ENCODE measurements at regions of chr14 and their contacts with region 1.

Region 1: GRCh38 chr14:96424109-96424989 is 32.4 kb downstream of the AK7 start:
- DNase-seq: peak; percentile 80
- ATAC-seq: peak; percentile 86
- H3K4me3 ChIP-seq: peak overlapping the region; percentile 14 to 57 (median 53)
- H3K4me3 Mint-ChIP-seq: peak overlapping the region; percentile 91
- H3K27ac ChIP-seq: no peak overlapping the region
- H3K27ac Mint-ChIP-seq: no peak overlapping the region
- H3K4me1 ChIP-seq: peaks cover 12 to 14% of the 10 kb centered on the region in 2 donors
- H3K4me1 Mint-ChIP-seq: peaks cover 23% of the 10 kb centered on the region
- H3K27me3 ChIP-seq: no peaks in the 10 kb centered on the region
- H3K27me3 Mint-ChIP-seq: peaks cover 4% of the 10 kb centered on the region
- CTCF ChIP-seq: peak; percentile 99

Region 2: DNA sequence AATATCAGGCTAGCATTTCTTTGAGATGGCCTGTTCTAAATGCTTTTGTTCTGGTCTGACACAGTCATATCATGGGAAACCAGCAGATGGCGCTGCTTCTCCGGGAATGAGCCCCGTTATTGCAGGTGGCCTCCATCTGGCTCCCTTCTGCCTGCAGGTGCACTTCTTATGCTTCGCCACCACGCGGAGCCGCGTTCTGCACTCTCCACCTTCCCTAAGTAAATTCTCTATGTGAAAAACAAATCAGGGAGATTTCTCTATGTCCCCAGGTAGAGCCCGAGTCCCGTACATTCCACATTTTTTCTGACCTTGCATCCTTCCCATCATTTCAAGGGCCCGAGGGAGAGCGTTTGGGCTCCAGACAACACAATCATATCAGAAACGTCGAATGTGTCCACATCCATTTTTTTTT is 863.3 kb before region 1 on chr14:
- CTCF ChIA-PET with region 1: no interaction called
- POLR2A ChIA-PET with region 1: no interaction called
- intact Hi-C with region 1: loop called (anchors 1 kb)
- DNase-seq: peak; percentile 91
- ATAC-seq: peak; percentile 97
- H3K4me3 ChIP-seq: no peak overlapping the region
- H3K4me3 Mint-ChIP-seq: no peak overlapping the region
- H3K27ac ChIP-seq: no peak overlapping the region
- H3K27ac Mint-ChIP-seq: peak overlapping the region; percentile 4
- H3K4me1 ChIP-seq: peaks cover 0 to 3% of the 10 kb centered on the region in 2 donors
- H3K4me1 Mint-ChIP-seq: peaks cover 4% of the 10 kb centered on the region
- H3K27me3 ChIP-seq: peaks cover 0 to 14% (median 6%) of the 10 kb centered on the region in 4 experiments
- H3K27me3 Mint-ChIP-seq: peaks cover 23% of the 10 kb centered on the region
- CTCF ChIP-seq: peak; percentile 99

Region 3: GRCh38 chr14:95841668-95842067 is 582.7 kb before region 1 on chr14:
- CTCF ChIA-PET with region 1: no interaction called
- POLR2A ChIA-PET with region 1: no interaction called
- intact Hi-C with region 1: no loop called
- DNase-seq: no peak
- ATAC-seq: no peak
- H3K4me3 ChIP-seq: no peak overlapping the region
- H3K4me3 Mint-ChIP-seq: no peak overlapping the region
- H3K27ac ChIP-seq: no peak overlapping the region
- H3K27ac Mint-ChIP-seq: no peak overlapping the region
- H3K4me1 ChIP-seq: peaks cover 0 to 6% of the 10 kb centered on the region in 2 donors
- H3K4me1 Mint-ChIP-seq: peaks cover 2% of the 10 kb centered on the region
- H3K27me3 ChIP-seq: no peaks in the 10 kb centered on the region
- H3K27me3 Mint-ChIP-seq: no peaks in the 10 kb centered on the region
- CTCF ChIP-seq: no peak

Region 4: DNA sequence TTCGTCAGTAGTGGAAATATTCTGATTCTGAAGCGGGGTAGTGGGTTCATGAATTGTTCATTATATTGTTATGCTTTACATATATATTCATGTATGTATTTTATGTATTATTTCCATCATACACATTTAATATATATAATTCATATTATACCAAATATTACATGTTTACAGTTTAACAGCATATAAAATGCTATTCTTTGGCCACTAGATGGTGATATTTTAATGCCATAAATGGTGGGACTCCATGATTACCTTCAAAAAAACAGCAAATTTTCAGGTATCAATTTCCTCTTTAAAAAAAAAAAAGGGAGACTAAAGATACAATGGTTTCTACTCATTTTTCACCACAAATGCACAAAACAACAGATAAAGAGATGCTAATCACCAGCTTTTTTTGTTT is 127.3 kb before region 1 on chr14:
- CTCF ChIA-PET with region 1: interaction called, 107 read pairs
- POLR2A ChIA-PET with region 1: no interaction called
- intact Hi-C with region 1: no loop called
- DNase-seq: peak; percentile 42
- ATAC-seq: no peak
- H3K4me3 ChIP-seq: no peak overlapping the region
- H3K4me3 Mint-ChIP-seq: no peak overlapping the region
- H3K27ac ChIP-seq: no peak overlapping the region
- H3K27ac Mint-ChIP-seq: no peak overlapping the region
- H3K4me1 ChIP-seq: no peaks in the 10 kb centered on the region
- H3K4me1 Mint-ChIP-seq: no peaks in the 10 kb centered on the region
- H3K27me3 ChIP-seq: no peaks in the 10 kb centered on the region
- H3K27me3 Mint-ChIP-seq: no peaks in the 10 kb centered on the region
- CTCF ChIP-seq: peak; percentile 82

Region 5: DNA sequence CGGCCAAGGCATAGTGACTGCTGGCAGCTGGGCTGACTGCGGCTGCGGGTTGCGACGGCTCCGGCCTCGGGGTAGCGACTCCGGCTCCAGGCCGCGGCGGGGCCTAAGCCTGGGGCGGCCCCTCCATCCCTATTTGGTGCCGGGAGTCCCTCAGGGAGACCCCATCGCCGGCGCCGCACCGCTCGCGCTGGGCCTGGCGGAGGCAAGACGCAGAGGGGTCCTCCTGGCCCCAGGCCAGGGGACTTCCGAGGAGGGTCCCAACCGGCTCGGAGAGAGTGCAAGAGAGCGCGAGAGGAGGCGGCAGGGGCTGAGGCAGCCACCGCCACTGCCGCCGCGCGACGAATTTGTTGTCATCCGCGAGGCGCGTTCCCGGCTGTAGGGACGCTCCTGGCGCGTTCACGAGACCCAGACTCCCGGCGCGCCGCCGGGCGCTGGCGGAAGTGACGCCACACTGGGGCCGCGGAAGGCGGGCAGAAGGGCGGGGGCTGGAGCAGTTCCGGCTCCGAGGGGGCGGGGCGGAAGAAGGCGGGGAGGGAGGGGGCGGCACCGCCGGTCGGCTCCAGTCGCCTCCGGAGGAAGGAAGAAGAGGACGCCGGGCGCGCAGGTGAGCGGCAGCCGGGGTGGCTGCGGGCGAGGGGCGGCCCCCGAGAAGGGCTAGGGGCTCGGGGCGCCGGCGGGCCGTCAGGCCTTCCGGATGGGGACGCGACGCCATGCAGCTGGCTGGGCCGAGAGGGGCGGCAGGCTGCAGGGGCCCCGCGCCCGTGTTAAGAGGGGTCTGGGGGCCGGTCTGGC is 61.2 kb before region 1 on chr14 and contains the starts of genes ATG2B and GSKIP:
- CTCF ChIA-PET with region 1: interaction called, 3 read pairs
- POLR2A ChIA-PET with region 1: no interaction called
- intact Hi-C with region 1: loop called (anchors 1 kb)
- DNase-seq: peak; percentile 97
- ATAC-seq: peak; percentile 80
- H3K4me3 ChIP-seq: peak within 1 kb of the TSS; percentile 75 to 97 (median 91)
- H3K4me3 Mint-ChIP-seq: peak within 1 kb of the TSS; percentile 89
- H3K27ac ChIP-seq: peak within 1 kb of the TSS; percentile 77 to 98
- H3K27ac Mint-ChIP-seq: peak within 1 kb of the TSS; percentile 91
- H3K4me1 ChIP-seq: peaks cover 25 to 28% of the 10 kb centered on the region in 2 donors
- H3K4me1 Mint-ChIP-seq: peaks cover 44% of the 10 kb centered on the region
- H3K27me3 ChIP-seq: no peaks in the 10 kb centered on the region
- H3K27me3 Mint-ChIP-seq: no peaks in the 10 kb centered on the region
- CTCF ChIP-seq: no peak
- total RNA-seq, gene ATG2B: 37.5 and 39.6 TPM in 2 replicates
- total RNA-seq, gene GSKIP: 14.9 and 15.8 TPM in 2 replicates

Region 6: GRCh38 chr14:96391293-96392118 is 32.8 kb before region 1 on chr14:
- CTCF ChIA-PET with region 1: interaction called, 4 read pairs
- POLR2A ChIA-PET with region 1: no interaction called
- intact Hi-C with region 1: loop called (anchors 1 kb)
- DNase-seq: peak; percentile 98
- ATAC-seq: peak; percentile 94
- H3K4me3 ChIP-seq: peak overlapping the region; percentile 68 to 96 (median 77)
- H3K4me3 Mint-ChIP-seq: peak overlapping the region; percentile 93
- H3K27ac ChIP-seq: peak overlapping the region; percentile 45 to 74
- H3K27ac Mint-ChIP-seq: peak overlapping the region; percentile 79
- H3K4me1 ChIP-seq: peaks cover 7 to 18% of the 10 kb centered on the region in 2 donors
- H3K4me1 Mint-ChIP-seq: peaks cover 8% of the 10 kb centered on the region
- H3K27me3 ChIP-seq: no peaks in the 10 kb centered on the region
- H3K27me3 Mint-ChIP-seq: peaks cover 5% of the 10 kb centered on the region
- CTCF ChIP-seq: no peak

Region 7: GRCh38 chr14:96662116-96662970 is 238.0 kb after region 1 on chr14:
- CTCF ChIA-PET with region 1: no interaction called
- POLR2A ChIA-PET with region 1: no interaction called
- intact Hi-C with region 1: no loop called
- DNase-seq: no peak
- ATAC-seq: no peak
- H3K4me3 ChIP-seq: no peak overlapping the region
- H3K4me3 Mint-ChIP-seq: no peak overlapping the region
- H3K27ac ChIP-seq: no peak overlapping the region
- H3K27ac Mint-ChIP-seq: no peak overlapping the region
- H3K4me1 ChIP-seq: no peaks in the 10 kb centered on the region
- H3K4me1 Mint-ChIP-seq: peaks cover 2% of the 10 kb centered on the region
- H3K27me3 ChIP-seq: peaks cover 0 to 8% (median 2%) of the 10 kb centered on the region in 4 experiments
- H3K27me3 Mint-ChIP-seq: peaks cover 29% of the 10 kb centered on the region
- CTCF ChIP-seq: no peak

Measured in B cell (primary cell).